Activated CD4-positive, alpha-beta T cell treated with anti-CD3 and anti-CD28 coated beads, Interleukin-2, amount 10 ng/mL, durations not matched to agents 24 days and 14 days (primary cell): ENCODE measurements at regions of chr17 and their contacts with region 1.

Region 1: GRCh38 chr17:2672026-2672425 is 39.5 kb downstream of the CLUH start:
- DNase-seq: no peak
- H3K4me3 Mint-ChIP-seq: no peak overlapping the region
- H3K27ac Mint-ChIP-seq: no peak overlapping the region
- H3K4me1 Mint-ChIP-seq: peaks cover 4% of the 10 kb centered on the region
- H3K27me3 Mint-ChIP-seq: no peaks in the 10 kb centered on the region

Region 2: DNA sequence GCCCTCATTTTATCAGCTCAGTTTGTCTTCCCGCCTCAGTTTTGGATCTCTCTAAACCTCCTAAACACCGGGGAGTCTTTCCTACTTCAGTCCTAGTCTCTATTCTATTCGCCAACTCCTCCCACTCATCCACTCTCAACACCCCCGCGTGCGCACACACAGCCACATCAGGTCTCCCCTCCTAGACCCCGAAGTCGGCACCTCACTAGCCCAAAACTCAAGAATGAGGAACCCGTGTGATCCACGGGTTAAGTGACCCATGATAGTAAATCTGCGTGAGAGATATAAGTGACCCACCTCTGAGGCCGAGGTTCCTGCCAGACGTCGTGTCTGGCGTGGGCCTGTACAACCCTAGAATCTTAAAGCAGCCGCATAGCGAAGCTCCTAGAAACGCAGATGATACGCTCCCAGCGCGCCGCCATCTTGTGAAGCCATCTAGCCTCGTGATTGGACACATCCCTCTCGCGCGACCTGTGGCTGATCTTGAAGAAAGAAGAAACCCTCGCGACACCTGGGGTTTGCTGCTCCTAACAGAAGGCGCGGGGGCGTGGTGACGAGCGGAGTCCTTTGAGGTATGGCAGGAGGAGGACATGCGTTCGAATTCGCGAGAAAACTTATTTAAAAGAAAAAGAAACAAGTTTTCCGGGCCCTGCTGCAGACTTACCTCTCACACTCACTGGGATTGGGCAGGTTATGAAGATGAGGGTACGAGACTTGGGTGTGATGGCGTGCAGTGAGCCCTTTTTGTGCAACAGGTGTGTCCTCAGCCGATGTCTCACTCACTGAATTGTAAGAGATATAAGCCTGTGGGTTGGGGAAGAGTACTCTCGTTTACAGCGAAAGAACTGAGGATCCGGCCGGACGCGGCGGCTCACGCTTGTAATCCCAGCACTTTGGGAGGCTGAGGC is 160.3 kb before region 1 on chr17 and contains the start of gene METTL16:
- intact Hi-C with region 1: loop called (anchors 10 kb)
- DNase-seq: peak; percentile 99
- H3K4me3 Mint-ChIP-seq: peak within 1 kb of the TSS; percentile 56
- H3K27ac Mint-ChIP-seq: no peak within 1 kb of the TSS
- H3K4me1 Mint-ChIP-seq: peaks cover 13% of the 10 kb centered on the region
- H3K27me3 Mint-ChIP-seq: peaks cover 3% of the 10 kb centered on the region
- total RNA-seq, gene METTL16: 59.5 and 61.1 TPM in 2 replicates